ENCODE measurements at regions of chr3 and their contacts with region 1.

Region 1: DNA sequence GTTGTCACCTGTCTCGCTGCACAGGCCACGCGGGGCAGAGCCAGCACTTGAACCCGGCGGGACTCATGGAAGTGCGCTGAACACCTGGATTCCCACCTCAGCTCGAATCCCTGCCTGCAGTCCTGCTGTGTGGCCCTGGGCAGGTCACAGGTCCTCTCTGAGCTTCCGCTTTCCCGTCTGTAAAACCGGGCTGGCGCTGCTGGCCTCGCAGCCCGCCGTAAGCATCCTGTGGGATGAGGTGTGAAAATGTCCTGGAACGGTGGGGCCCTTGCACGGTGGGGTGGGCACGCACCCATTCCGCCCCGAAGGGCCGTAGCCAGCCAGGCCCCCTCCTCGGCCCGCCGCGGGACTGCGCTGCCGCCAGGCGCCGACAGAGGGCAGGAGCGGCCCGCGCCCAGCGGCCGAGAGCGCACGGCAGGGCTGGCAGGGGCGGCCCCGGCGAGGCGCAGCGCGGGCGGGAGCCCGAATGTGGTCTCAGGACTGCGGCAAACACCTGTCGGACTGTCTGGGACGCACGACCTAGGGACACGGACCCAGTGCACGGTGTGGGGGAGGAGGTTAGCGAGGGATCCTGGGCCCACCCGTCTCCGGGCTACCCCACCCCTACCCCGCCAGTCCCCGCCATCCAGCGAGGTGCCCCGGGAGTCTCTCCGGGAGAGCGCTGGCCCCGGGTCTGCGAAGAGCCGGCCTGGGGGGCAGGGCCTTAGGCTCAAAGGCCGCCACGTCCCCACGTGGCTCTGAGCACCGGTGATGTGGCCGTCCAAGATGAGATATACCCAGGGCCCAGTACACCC is 40.4 kb downstream of the DNAJB8 start:
- DNase-seq: no peak
- H3K4me3 ChIP-seq: peak overlapping the region; percentile 36; the same call in 1 of the 2 replicates
- CTCF ChIP-seq: peak; percentile 75

Region 2: DNA sequence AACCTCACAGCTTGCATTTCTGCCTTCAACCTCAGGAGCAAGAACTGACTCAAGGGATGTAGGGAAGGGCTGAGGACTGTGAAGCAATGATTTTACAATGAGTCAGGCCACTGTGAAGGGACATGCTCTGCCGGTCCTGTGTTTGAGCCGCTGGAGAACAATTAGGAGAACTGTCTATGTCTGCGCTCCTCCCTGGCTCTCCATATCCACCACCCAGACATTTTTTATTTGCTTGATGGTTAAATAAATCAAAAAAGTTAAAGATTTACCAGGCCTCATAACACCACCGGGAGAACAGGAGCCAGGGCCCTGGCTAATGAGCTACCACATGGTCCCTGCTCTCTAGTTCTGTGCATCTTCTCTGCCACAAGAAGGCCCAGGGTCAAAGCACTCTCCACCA is 344.5 kb before region 1 on chr3:
- CTCF ChIA-PET with region 1: no interaction called
- POLR2A ChIA-PET with region 1: no interaction called
- DNase-seq: no peak
- H3K4me3 ChIP-seq: no peak overlapping the region
- CTCF ChIP-seq: no peak

Region 3: GRCh38 chr3:128293930-128294329 is 132.4 kb before region 1 on chr3:
- CTCF ChIA-PET with region 1: no interaction called
- POLR2A ChIA-PET with region 1: no interaction called
- DNase-seq: no peak
- H3K4me3 ChIP-seq: no peak overlapping the region
- CTCF ChIP-seq: no peak

Region 4: GRCh38 chr3:128438488-128439072 is 12.3 kb after region 1 on chr3:
- CTCF ChIA-PET with region 1: interaction called, 27 read pairs
- POLR2A ChIA-PET with region 1: no interaction called
- DNase-seq: no peak
- H3K4me3 ChIP-seq: no peak overlapping the region
- CTCF ChIP-seq: no peak

Region 5: DNA sequence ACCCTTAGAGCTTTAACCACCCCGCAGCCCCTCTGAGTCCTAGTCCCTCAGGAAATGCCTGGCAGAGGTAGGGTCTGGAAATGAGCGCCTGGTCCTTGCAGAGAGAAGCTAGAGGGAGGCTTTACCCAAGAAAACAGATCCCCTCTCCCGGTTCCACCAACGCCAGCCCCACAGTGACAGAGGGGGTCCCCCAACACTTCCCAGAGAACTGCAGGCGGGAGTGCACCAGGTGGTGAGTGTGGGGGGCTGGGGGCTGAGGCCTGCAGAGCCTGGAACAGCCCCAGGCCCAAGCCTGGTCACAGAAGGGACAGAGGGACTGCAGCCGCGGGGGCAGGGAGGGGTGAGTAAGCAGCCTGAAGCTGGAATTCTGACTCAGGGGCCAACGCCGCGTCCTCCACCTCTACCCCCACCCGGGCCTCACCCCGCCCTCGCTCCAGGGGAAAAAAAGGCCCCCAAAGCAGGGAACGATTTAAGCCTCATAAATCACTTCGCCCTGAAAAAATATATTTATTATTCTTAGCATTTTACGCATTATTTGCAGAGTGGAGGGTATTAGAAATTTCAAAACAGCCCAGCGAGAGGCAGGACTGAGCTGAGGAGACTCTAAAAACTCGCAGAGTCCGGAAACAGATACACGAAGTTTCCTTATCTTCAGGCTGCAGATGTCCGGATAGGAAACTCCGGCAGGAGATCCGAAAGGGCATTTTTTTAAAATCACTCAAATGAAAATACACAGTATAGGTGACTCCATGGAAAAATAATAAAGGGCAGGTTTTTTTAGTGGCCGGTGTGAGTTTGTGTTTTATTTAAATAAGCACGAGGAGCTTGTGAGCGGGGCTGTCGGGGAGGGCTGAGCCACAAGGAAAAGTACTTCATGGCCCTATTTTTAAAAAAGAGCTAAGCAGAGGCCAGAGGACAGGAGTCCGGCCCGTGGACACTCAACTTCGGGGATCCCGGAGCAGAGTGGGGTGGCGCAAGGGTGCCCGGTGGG is 56.6 kb after region 1 on chr3:
- CTCF ChIA-PET with region 1: interaction called, 30 read pairs
- POLR2A ChIA-PET with region 1: interaction called, 4 read pairs
- DNase-seq: peak; percentile 36
- H3K4me3 ChIP-seq: peak overlapping the region; percentile 26
- CTCF ChIP-seq: no peak

Region 6: GRCh38 chr3:128487813-128488635 is 61.7 kb after region 1 on chr3:
- CTCF ChIA-PET with region 1: interaction called, 30 read pairs
- POLR2A ChIA-PET with region 1: interaction called, 4 read pairs
- DNase-seq: peak; percentile 55
- H3K4me3 ChIP-seq: peak overlapping the region; percentile 82
- CTCF ChIP-seq: no peak

Region 7: DNA sequence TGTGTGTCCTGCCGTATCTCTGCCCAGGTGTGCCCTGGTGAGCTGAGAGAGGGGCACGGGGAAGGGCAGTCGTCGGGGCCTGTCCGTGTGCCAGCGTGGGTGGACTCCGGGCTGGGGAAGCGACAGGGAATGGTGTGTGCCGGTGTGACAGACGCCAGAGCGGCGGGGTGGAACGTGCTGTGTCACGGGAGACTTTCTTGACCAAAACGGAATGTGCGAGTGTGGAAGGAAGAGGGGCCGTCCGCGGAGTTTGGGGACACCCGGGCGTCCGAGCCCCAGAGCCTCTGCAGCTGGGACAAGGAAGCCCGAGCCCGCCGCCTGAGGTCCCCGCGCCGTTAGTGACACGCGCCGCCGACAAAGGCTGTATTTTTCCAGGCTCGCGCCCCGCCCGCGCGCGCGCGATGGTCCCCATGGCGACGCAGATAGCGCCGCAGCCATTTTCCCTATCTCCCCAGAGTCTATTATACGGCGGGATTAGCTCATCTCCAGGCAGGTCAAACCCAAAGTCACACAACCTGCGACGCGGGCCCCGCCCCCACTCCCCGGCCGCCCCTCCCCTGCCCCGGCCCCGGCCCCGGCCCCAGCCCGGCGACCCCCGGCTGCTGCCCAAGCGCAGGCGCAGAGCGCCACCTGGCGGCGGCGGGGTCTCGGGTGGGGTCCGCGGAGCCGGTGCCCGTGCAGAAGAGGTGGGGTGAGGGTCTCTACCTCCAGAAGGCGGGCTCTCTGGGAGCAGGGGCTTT is 71.2 kb after region 1 on chr3:
- CTCF ChIA-PET with region 1: interaction called, 64 read pairs
- POLR2A ChIA-PET with region 1: interaction called, 4 read pairs
- DNase-seq: no peak
- H3K4me3 ChIP-seq: peak overlapping the region; percentile 57
- CTCF ChIP-seq: peak; percentile 79

Region 8: GRCh38 chr3:128584412-128585020 is 158.2 kb after region 1 on chr3:
- CTCF ChIA-PET with region 1: interaction called, 79 read pairs
- POLR2A ChIA-PET with region 1: no interaction called
- DNase-seq: peak; percentile 23
- H3K4me3 ChIP-seq: no peak overlapping the region
- CTCF ChIP-seq: peak; percentile 98